Calu3 (cell line): ENCODE measurements at regions of chr7 and their contacts with region 1.

Region 1: DNA sequence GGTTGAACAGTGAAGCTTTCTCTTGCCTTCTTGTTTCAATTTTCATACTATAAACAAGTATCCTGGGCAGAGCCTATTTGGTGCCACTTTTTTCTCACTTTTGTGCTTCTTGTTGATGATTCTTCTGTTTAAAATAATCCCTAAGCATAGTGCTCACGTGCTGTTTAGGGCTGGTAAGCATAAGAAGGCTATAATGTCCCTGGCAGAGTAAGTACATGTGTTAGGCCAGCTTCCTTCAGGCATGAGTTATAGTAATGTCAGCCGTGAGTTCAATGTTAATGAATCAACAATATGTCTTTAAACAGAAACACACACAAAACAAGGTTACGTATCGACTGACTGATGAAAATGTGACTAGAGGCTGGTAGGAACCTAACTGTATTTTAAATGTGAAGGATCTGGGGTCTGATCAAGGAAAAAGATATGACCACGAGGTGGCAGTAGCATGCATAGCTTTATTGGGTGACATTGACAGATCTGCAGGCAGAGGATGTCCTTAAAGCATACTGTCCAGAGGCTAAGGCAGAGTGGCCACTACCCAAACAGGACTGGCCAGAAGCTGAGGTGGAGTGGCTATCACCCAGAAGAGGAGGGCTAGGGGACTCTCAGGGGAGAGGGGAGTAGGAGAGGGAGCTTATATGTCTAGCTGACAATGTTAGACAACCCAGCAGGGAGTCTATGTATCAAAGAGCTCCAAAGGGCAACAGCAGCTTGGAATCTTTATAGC is 113.7 kb downstream of the BRAF start:
- DNase-seq: peak; percentile 71
- H3K4me3 Mint-ChIP-seq: no peak overlapping the region
- H3K27ac Mint-ChIP-seq: no peak overlapping the region
- H3K4me1 Mint-ChIP-seq: no peaks in the 10 kb centered on the region
- H3K27me3 Mint-ChIP-seq: no peaks in the 10 kb centered on the region
- CTCF ChIP-seq: peak; percentile 50

Region 2: GRCh38 chr7:140924019-140924820 is 113.2 kb after region 1 on chr7:
- CTCF ChIA-PET with region 1: interaction called, 3 read pairs
- intact Hi-C with region 1: loop called (anchors 5 kb)
- DNase-seq: peak; percentile 74
- H3K4me3 Mint-ChIP-seq: no peak overlapping the region
- H3K27ac Mint-ChIP-seq: no peak overlapping the region
- H3K4me1 Mint-ChIP-seq: no peaks in the 10 kb centered on the region
- H3K27me3 Mint-ChIP-seq: no peaks in the 10 kb centered on the region
- CTCF ChIP-seq: peak; percentile 53

Region 3: GRCh38 chr7:140990193-140990962 is 179.4 kb after region 1 on chr7:
- CTCF ChIA-PET with region 1: no interaction called
- intact Hi-C with region 1: loop called (anchors 5 kb)
- DNase-seq: peak; percentile 14
- H3K4me3 Mint-ChIP-seq: no peak overlapping the region
- H3K27ac Mint-ChIP-seq: no peak overlapping the region
- H3K4me1 Mint-ChIP-seq: peaks cover 16% of the 10 kb centered on the region
- H3K27me3 Mint-ChIP-seq: no peaks in the 10 kb centered on the region
- CTCF ChIP-seq: no peak

Region 4: GRCh38 chr7:141014524-141015395 is 203.8 kb after region 1 on chr7 and contains the start of gene MRPS33:
- CTCF ChIA-PET with region 1: interaction called, 9 read pairs
- intact Hi-C with region 1: loop called (anchors 1 kb)
- DNase-seq: peak; percentile 93
- H3K4me3 Mint-ChIP-seq: peak within 1 kb of the TSS; percentile 92
- H3K27ac Mint-ChIP-seq: peak within 1 kb of the TSS; percentile 89
- H3K4me1 Mint-ChIP-seq: peaks cover 9% of the 10 kb centered on the region
- H3K27me3 Mint-ChIP-seq: no peaks in the 10 kb centered on the region
- CTCF ChIP-seq: no peak
- total RNA-seq, gene MRPS33: 54.6 and 60.3 TPM in 2 replicates

Region 5: DNA sequence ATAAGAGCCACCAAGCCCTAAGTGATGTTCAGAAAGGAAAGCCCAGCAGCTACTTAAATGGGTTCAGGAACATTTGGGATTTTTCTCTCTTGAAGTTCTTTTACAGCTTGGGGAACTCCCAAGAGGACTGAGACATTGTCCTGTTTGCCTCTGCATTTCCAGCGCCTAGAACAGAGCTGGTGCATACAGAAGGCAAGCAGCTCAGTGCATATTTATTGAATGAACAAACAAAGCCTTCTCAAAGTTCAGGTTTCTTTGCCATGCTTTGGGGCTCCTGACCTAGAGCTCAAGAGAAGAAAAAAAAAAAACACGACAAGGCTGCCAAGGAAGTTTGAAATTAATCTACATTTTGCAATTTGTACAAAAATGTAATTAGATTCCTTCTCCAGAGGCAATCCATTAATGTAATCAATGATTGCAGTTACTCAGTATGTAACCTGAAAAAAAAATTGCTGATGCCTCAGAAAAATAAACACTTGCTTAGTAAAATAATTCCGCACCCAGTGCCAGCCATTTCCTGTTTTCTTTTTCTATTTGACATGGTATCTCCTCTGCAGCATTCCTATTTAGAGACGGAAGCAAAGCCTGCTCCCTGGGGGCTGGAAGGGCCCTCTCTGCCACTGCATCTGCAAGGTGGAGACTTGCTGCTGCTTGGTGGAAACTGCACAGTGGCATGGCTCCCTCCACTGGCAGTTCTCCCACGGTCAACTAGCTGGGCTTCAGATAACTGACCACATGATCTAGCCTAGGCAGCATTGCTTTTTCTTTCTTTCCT is 420.2 kb after region 1 on chr7:
- CTCF ChIA-PET with region 1: no interaction called
- intact Hi-C with region 1: loop called (anchors 1 kb)
- DNase-seq: peak; percentile 49
- H3K4me3 Mint-ChIP-seq: no peak overlapping the region
- H3K27ac Mint-ChIP-seq: no peak overlapping the region
- H3K4me1 Mint-ChIP-seq: no peaks in the 10 kb centered on the region
- H3K27me3 Mint-ChIP-seq: peaks cover 14% of the 10 kb centered on the region
- CTCF ChIP-seq: no peak

Region 6: GRCh38 chr7:141533149-141533949 is 722.4 kb after region 1 on chr7:
- CTCF ChIA-PET with region 1: interaction called, 4 read pairs
- intact Hi-C with region 1: loop called (anchors 1 kb)
- DNase-seq: peak; percentile 62
- H3K4me3 Mint-ChIP-seq: no peak overlapping the region
- H3K27ac Mint-ChIP-seq: no peak overlapping the region
- H3K4me1 Mint-ChIP-seq: no peaks in the 10 kb centered on the region
- H3K27me3 Mint-ChIP-seq: peaks cover 25% of the 10 kb centered on the region
- CTCF ChIP-seq: peak; percentile 85